ENCODE measurements at regions of chr2 and their contacts with region 1.

Region 1: DNA sequence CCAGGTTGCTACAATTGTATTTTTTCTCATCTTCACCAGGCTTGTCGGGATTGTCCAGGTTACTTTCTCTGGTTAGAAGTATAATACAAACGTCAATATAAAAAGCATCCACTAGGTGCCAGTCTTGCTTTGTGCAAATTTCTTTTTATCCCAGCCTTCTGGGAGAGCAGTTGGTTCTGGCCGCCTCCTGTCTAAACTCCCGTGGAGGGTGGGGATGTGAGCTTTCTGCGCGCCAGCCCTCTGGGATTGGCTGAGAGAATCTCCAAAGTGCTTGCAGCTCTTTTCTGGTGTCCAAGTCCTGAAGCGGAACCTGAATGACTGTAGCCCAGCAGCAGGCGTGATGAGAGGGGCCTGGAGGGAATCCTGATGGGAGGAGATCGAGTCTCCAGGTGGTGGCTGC is 22.4 kb upstream of the TOGARAM2 start:
- DNase-seq: peak; percentile 86
- H3K4me3 Mint-ChIP-seq: no peak overlapping the region
- H3K27ac Mint-ChIP-seq: no peak overlapping the region
- H3K4me1 Mint-ChIP-seq: peaks cover 12% of the 10 kb centered on the region
- H3K27me3 Mint-ChIP-seq: peaks cover 7% of the 10 kb centered on the region

Region 2: DNA sequence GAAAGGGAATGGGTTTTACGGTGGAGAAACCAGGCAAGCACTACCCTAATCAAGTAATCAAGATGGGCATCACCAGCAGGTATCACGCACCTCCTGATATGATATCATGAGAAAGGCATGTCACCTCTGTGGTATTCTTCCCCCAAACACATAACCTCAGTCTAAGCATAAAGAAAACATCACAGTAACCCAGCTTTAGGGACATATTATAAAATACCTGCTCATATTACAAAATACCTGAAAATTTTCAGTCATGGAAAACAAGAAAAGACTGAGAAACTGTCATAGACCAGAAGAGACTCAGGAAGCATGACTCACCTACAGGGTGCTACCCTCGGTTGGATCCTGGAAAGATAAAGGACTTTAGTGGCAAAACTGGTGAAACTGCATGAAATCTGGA is 1431.5 kb before region 1 on chr2:
- intact Hi-C with region 1: no loop called
- DNase-seq: no peak
- H3K4me3 Mint-ChIP-seq: no peak overlapping the region
- H3K27ac Mint-ChIP-seq: no peak overlapping the region
- H3K4me1 Mint-ChIP-seq: peaks cover 2% of the 10 kb centered on the region
- H3K27me3 Mint-ChIP-seq: peaks cover 24% of the 10 kb centered on the region

Region 3: DNA sequence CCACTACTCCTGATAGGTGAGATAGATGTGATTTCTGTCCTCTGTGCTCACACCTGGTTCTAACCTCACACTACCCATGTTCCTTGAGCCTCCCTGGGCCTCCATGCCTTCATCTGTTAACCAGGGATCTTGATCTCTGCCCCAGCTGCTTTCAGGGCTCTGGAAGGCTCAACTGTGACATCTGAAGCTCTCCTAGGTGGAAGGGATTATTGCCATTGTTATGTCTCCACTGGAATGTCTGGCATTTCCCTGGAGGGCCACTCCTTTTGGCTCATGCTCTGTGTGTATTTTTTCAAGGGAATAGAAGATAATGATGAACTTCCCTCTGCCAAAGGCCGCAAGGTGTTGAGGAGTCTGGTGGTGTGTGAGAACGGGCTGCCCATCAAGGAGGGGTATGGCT is 74.5 kb after region 1 on chr2:
- intact Hi-C with region 1: no loop called
- DNase-seq: no peak
- H3K4me3 Mint-ChIP-seq: no peak overlapping the region
- H3K27ac Mint-ChIP-seq: no peak overlapping the region
- H3K4me1 Mint-ChIP-seq: peaks cover 10% of the 10 kb centered on the region
- H3K27me3 Mint-ChIP-seq: no peaks in the 10 kb centered on the region

Region 4: GRCh38 chr2:29196792-29197788 is 238.4 kb after region 1 on chr2:
- intact Hi-C with region 1: loop called (anchors 1 kb)
- DNase-seq: peak; percentile 94
- H3K4me3 Mint-ChIP-seq: no peak overlapping the region
- H3K27ac Mint-ChIP-seq: no peak overlapping the region
- H3K4me1 Mint-ChIP-seq: no peaks in the 10 kb centered on the region
- H3K27me3 Mint-ChIP-seq: no peaks in the 10 kb centered on the region

Measured in activated CD4-positive, alpha-beta T cell treated with anti-CD3 and anti-CD28 coated beads, Interleukin-2, amount 10 ng/mL, durations not matched to agents 24 days and 14 days (primary cell).